Posterior vena cava (tissue), 2 donors: ENCODE measurements at regions of chr10 and their contacts with region 1.

Region 1: DNA sequence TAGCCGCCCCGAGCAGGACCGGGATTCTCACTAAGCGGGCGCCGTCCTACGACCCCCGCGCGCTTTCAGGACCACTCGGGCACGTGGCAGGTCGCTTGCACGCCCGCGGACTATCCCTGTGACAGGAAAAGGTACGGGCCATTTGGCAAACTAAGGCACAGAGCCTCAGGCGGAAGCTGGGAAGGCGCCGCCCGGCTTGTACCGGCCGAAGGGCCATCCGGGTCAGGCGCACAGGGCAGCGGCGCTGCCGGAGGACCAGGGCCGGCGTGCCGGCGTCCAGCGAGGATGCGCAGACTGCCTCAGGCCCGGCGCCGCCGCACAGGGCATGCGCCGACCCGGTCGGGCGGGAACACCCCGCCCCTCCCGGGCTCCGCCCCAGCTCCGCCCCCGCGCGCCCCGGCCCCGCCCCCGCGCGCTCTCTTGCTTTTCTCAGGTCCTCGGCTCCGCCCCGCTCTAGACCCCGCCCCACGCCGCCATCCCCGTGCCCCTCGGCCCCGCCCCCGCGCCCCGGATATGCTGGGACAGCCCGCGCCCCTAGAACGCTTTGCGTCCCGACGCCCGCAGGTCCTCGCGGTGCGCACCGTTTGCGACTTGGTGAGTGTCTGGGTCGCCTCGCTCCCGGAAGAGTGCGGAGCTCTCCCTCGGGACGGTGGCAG is at the start of gene MGMT:
- DNase-seq: peak; percentile 98
- total RNA-seq, gene MGMT: 8.2 to 17.6 TPM

Region 2: GRCh38 chr10:127619546-127620325 is 1847.1 kb before region 1 on chr10:
- intact Hi-C with region 1: no loop called
- DNase-seq: no peak

Region 3: DNA sequence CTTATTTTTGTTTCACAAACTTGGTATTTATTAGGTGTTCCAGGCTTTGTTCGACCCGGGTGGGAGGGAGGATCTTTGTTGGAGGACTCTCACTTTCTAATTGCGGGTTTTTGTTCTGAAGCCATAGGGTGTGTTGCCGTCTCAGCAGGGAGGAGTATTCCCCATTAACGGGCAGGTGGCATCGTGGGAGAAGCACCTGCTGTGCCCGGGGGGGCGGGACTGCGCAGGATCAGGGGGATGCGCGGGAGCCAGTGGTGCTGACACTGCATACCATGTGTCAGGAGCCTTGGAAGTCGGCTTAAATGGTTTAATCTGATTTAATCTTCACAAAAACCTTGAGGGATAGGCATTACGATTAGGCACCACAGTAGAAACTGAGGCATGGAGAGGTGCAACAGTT is 113.2 kb after region 1 on chr10:
- intact Hi-C with region 1: no loop called
- DNase-seq: no peak

Region 4: GRCh38 chr10:129963641-129964501 is 497.0 kb after region 1 on chr10 and contains the start of gene EBF3:
- intact Hi-C with region 1: loop called in 1 of 2 experiments (anchors 10 kb)
- DNase-seq: peak; percentile 94
- total RNA-seq, gene EBF3: 8.7 to 9.1 TPM